ENCODE measurements at regions of chr6 and their contacts with region 1.

Region 1: DNA sequence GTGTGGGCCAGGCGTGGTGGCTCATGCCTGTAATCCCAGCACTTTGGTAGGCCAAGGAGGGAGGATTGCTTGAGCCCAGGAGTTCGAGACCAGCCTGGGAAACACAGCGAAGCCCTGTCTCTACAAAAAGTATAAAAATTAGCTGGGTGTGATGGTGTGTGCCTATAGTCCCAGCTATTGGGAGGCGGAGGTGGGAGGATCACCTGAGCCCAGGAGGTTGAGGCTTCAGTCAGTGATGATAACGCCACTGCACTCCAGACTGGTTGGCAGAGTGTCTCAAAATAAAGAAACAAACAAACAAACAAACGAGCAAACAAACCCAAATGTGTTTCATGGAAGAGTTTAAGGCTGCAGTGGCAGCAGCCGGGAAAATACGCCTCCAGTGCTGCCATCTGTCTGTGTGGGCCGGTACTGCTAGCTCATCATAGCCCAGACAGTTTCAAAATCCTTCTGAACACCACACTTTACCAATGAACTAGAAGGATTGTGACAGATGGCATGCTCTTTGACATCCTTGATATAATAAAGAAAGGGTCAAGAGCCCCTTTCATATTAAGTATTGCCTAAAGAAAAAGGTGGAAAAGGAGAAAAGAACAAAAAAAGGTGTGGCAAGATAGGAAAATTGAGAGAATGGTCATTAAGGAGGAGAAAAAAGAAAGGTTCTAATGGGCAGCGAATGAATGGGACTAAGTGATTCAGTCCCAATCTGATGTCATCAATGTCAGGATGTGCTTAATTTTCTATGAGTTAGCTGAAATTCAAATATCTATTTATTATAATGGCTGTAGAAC is 298.6 kb downstream of the SYNE1 start:
- DNase-seq: peak; percentile 61
- ATAC-seq: peak; percentile 74
- H3K4me3 Mint-ChIP-seq: no peak overlapping the region
- H3K27ac Mint-ChIP-seq: no peak overlapping the region
- H3K4me1 Mint-ChIP-seq: peaks cover 8% of the 10 kb centered on the region
- H3K27me3 Mint-ChIP-seq: peaks cover 6% of the 10 kb centered on the region

Region 2: GRCh38 chr6:151765444-151765886 is 573.1 kb before region 1 on chr6:
- CTCF ChIA-PET with region 1: interaction called, 11 read pairs
- DNase-seq: peak; percentile 60
- ATAC-seq: peak; percentile 68
- H3K4me3 Mint-ChIP-seq: no peak overlapping the region
- H3K27ac Mint-ChIP-seq: no peak overlapping the region
- H3K4me1 Mint-ChIP-seq: peaks cover 15% of the 10 kb centered on the region
- H3K27me3 Mint-ChIP-seq: peaks cover 37% of the 10 kb centered on the region

Region 3: DNA sequence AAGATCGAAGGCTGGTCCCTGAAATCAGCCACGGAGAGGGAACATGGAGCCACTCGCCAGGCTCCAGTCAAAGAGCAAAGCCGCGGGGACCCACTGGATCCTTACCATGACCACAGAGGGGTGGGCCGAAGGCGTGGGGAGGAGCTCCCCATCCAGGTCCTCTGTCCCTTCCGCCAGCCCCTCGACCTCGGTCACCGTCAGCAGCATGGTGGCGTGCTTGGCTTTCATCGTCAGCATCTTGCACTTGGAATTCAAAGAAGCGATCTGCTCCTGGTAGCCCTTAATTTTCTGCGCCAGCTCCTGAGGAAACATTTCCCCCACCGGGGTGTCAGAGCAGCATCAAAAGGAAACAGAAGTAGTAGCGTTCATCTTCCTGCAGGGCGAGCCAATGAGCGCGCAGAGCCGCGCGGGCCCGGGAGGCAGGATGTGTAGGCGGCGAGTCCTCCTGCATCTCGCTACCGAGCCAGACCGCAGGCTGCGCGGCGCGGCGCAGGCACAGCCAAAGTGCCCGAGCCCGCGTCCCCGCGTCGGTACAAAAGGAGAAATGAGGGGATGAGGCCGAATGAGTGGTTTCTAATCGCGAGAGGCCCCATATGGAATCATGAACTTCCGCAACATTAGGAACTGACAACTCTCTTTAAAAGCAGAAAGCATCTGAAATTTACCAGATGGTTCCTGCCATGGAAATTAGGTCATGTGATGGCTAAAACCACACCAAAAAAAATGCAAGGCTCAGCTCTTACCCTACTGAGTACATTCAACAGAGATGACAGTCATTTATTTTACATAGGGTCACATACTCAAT is 36.6 kb before region 1 on chr6:
- CTCF ChIA-PET with region 1: interaction called, 50 read pairs
- DNase-seq: peak; percentile 94
- ATAC-seq: peak; percentile 98
- H3K4me3 Mint-ChIP-seq: peak overlapping the region; percentile 96
- H3K27ac Mint-ChIP-seq: peak overlapping the region; percentile 100
- H3K4me1 Mint-ChIP-seq: peaks cover 32% of the 10 kb centered on the region
- H3K27me3 Mint-ChIP-seq: no peaks in the 10 kb centered on the region

Region 4: DNA sequence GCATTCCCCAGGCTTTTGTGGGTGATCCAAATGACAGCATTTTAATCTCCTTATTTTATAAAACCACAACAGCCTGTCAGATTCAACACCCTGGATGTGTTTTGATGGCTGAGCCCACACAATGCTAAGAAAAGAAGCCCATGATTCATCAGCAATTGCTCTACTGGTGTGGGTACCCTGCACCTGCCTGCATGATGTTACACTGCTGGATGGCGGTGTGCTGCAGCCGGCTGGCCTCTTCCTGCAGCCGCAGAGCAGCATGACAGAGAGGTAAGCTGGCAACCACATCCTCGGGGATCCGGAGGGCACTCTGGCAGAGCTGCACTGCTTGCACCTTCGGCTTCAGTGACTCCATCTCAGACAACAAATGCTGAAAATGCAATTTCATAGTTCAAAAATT is 28.9 kb before region 1 on chr6:
- CTCF ChIA-PET with region 1: interaction called, 28 read pairs
- DNase-seq: peak; percentile 89
- ATAC-seq: peak; percentile 99
- H3K4me3 Mint-ChIP-seq: no peak overlapping the region
- H3K27ac Mint-ChIP-seq: no peak overlapping the region
- H3K4me1 Mint-ChIP-seq: peaks cover 30% of the 10 kb centered on the region
- H3K27me3 Mint-ChIP-seq: no peaks in the 10 kb centered on the region

Region 5: GRCh38 chr6:152316024-152316423 is 22.5 kb before region 1 on chr6:
- CTCF ChIA-PET with region 1: interaction called, 28 read pairs
- DNase-seq: no peak
- ATAC-seq: no peak
- H3K4me3 Mint-ChIP-seq: no peak overlapping the region
- H3K27ac Mint-ChIP-seq: no peak overlapping the region
- H3K4me1 Mint-ChIP-seq: peaks cover 4% of the 10 kb centered on the region
- H3K27me3 Mint-ChIP-seq: peaks cover 7% of the 10 kb centered on the region

Region 6: DNA sequence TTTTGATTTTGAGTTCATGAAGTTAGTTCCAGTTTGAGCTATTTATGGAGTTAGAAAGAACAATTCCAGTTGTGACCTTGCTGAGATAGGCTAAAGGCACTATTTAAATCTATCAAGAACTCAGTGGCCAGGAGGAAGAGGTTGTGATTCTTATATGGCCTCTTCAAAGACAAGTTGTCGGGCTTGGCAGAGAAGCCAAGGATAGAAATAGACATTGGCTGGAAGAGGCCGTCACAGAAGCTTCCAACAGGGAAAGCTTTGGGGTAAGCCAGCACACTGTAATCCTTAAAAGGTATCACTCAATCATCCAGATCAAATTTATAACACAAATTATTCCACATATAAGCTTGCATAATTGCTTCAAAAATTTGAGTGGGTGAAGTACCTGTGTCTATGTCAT is 12.6 kb after region 1 on chr6:
- CTCF ChIA-PET with region 1: interaction called, 11 read pairs
- DNase-seq: no peak
- ATAC-seq: no peak
- H3K4me3 Mint-ChIP-seq: no peak overlapping the region
- H3K27ac Mint-ChIP-seq: no peak overlapping the region
- H3K4me1 Mint-ChIP-seq: peaks cover 2% of the 10 kb centered on the region
- H3K27me3 Mint-ChIP-seq: peaks cover 2% of the 10 kb centered on the region

Region 7: GRCh38 chr6:152378169-152378568 is 39.6 kb after region 1 on chr6:
- CTCF ChIA-PET with region 1: no interaction called
- DNase-seq: no peak
- ATAC-seq: no peak
- H3K4me3 Mint-ChIP-seq: no peak overlapping the region
- H3K27ac Mint-ChIP-seq: no peak overlapping the region
- H3K4me1 Mint-ChIP-seq: no peaks in the 10 kb centered on the region
- H3K27me3 Mint-ChIP-seq: peaks cover 6% of the 10 kb centered on the region

Region 8: DNA sequence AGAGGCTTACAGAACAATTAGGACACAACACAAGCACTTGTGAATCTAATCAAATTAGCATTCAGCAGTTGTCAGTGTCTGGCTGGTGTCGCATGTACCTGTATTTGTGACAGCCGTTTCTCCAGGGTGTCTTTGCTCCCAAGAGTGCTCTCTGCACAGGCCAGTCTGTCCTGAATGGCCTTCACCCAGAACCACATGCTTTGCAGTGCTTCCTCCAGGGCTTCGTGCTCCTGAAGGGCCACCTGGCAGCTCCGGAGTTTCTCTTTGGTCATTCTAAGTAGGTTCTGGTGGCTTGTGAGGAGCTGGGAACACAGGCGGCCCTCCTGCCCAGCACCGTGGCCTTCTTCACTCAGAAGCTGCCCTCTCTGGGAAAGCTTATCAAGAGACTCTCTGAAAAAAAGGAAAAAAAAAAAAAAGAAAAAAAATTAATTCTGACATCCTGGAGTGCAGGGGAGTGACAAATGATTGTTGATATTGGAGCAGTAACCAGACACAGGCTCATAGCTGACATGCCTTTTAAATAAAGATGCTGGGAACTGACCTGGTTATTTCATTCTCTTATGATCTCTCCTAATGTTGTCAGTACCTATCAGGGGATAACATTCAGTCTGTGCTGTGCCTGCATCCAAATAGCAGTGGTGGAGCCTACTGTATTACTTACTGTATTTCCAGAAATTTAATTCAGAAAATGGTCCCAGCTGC is 52.8 kb after region 1 on chr6:
- CTCF ChIA-PET with region 1: no interaction called
- DNase-seq: no peak
- ATAC-seq: no peak
- H3K4me3 Mint-ChIP-seq: no peak overlapping the region
- H3K27ac Mint-ChIP-seq: no peak overlapping the region
- H3K4me1 Mint-ChIP-seq: no peaks in the 10 kb centered on the region
- H3K27me3 Mint-ChIP-seq: peaks cover 4% of the 10 kb centered on the region

Region 9: DNA sequence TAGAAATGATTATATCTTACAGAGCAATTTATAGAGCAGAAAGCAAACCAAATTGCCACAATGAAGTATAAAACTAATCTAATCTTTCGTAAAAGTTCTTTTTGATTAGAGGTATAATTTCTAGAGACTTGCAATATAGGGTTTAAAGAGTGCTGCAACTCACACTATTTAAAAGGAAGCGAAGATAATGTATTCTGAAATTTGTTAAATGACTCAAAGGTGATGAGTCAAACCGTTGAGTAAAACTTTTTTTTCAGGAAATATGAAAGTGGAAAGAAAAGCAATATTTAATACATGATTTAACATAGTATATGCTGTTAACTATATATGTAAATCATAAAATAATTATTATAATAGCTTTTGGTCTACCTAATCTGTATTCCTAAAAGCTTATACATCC is 165.0 kb after region 1 on chr6:
- CTCF ChIA-PET with region 1: no interaction called
- DNase-seq: no peak
- ATAC-seq: no peak
- H3K4me3 Mint-ChIP-seq: no peak overlapping the region
- H3K27ac Mint-ChIP-seq: no peak overlapping the region
- H3K4me1 Mint-ChIP-seq: no peaks in the 10 kb centered on the region
- H3K27me3 Mint-ChIP-seq: no peaks in the 10 kb centered on the region

Region 10: GRCh38 chr6:152661776-152662175 is 323.2 kb after region 1 on chr6:
- CTCF ChIA-PET with region 1: no interaction called
- DNase-seq: no peak
- ATAC-seq: no peak
- H3K4me3 Mint-ChIP-seq: no peak overlapping the region
- H3K27ac Mint-ChIP-seq: no peak overlapping the region
- H3K4me1 Mint-ChIP-seq: no peaks in the 10 kb centered on the region
- H3K27me3 Mint-ChIP-seq: peaks cover 2% of the 10 kb centered on the region

Measured in activated CD8-positive, alpha-beta memory T cell treated with anti-CD3 and anti-CD28 coated beads, Interleukin-2, amount 10 ng/mL, durations not matched to agents 7 days and 5 days (primary cell).